Dendritic cell treated with granulocyte-macrophage colony-stimulating factor and Interleukin-4, amounts not matched to agents 40 ng/mL and 50 ng/mL, for 4 days (primary cell): ENCODE measurements at regions of chr1 and their contacts with region 1.

Region 1: DNA sequence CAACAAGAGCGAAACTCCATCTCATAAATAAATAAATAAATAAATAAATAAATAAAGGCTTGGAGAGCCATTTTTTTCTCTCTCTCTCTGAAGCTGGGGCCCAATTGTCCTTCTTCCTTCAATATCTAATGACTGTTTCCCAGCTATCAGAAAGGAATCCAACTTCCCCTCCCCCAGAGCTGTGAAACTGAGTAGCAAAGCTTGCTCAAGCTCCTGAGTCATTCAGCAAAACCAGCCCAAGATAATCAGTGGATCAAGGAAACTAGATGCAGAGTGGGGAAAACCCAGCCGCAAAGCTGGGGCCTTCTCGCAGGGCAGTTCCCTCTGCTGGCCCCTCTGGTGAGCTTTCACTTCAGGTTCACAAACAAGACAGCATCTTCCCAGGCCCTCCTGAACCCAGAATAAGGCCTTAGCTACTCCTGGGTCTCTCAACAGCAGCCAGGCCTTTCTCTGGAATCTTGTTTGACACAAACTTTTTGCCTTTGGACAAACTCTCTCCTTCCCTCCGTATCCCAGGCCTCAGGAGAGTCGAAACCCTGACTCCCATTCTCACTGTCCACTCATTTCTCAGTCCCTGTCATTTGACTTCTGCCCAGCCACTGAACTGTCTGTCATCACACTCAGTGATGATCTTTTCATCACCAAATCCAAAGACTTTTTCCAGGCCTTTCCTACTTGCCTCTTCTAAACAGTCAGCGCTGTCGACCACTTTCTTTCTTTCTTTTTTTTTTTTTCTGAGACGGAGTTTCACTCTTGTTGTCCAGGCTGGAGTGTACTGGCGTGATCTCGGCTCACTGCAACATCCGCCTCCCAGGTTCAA is 18.0 kb upstream of the PTP4A2 start:
- H3K4me3 Mint-ChIP-seq: peak overlapping the region; percentile 30
- H3K27ac Mint-ChIP-seq: peak overlapping the region; percentile 60
- H3K4me1 Mint-ChIP-seq: peaks cover 75% of the 10 kb centered on the region
- H3K27me3 Mint-ChIP-seq: no peaks in the 10 kb centered on the region

Region 2: GRCh38 chr1:31663622-31664452 is 292.3 kb before region 1 on chr1:
- intact Hi-C with region 1: loop called (anchors 10 kb)
- H3K4me3 Mint-ChIP-seq: no peak overlapping the region
- H3K27ac Mint-ChIP-seq: no peak overlapping the region
- H3K4me1 Mint-ChIP-seq: peaks cover 5% of the 10 kb centered on the region
- H3K27me3 Mint-ChIP-seq: peaks cover 24% of the 10 kb centered on the region

Region 3: GRCh38 chr1:31923901-31924535 is 32.1 kb before region 1 on chr1:
- intact Hi-C with region 1: loop called (anchors 5 kb)
- H3K4me3 Mint-ChIP-seq: no peak overlapping the region
- H3K27ac Mint-ChIP-seq: no peak overlapping the region
- H3K4me1 Mint-ChIP-seq: peaks cover 71% of the 10 kb centered on the region
- H3K27me3 Mint-ChIP-seq: no peaks in the 10 kb centered on the region

Region 4: DNA sequence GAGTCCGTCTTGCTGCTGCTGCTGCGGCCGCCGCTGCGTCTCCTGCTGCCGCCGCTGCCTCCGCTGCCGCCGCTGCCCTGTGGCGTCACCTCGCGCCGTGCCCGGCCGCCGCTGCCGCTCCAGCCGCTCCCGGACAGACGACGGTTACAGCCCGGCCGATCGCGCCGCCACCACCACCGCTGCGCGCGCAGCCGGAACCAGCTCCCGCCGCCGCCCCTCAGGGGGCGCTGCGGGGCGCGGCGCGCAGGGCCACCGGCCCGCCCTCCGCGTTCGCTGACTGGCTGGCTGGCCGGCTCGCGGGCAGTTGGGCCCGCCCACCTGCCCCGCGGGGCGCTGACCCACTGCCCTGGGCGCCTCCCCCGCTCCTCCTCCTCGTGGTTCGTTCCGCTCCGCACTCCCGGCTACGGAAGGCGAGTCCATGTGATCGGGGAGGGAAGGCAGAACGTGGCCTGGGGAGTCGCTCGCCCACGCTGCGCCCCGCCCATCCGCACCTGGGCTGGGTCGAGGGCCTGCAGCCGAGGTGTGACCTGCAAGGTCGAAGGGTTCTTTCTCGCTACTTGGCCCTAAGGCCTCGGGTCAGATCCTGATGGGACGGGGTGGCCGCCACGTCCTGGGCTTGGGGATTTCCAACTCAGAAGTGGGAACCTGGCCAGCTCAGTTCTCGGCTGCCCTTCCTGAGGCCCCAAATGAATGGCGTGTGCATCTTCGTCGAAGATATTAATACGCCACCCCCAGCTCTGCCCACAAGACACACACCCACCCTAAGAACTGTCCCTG is 17.8 kb before region 1 on chr1 and contains the start of gene PTP4A2:
- intact Hi-C with region 1: loop called (anchors 2 kb)
- H3K4me3 Mint-ChIP-seq: peak within 1 kb of the TSS; percentile 92
- H3K27ac Mint-ChIP-seq: peak within 1 kb of the TSS; percentile 92
- H3K4me1 Mint-ChIP-seq: peaks cover 71% of the 10 kb centered on the region
- H3K27me3 Mint-ChIP-seq: no peaks in the 10 kb centered on the region